ENCODE measurements at regions of chr10 and their contacts with region 1.

Region 1: DNA sequence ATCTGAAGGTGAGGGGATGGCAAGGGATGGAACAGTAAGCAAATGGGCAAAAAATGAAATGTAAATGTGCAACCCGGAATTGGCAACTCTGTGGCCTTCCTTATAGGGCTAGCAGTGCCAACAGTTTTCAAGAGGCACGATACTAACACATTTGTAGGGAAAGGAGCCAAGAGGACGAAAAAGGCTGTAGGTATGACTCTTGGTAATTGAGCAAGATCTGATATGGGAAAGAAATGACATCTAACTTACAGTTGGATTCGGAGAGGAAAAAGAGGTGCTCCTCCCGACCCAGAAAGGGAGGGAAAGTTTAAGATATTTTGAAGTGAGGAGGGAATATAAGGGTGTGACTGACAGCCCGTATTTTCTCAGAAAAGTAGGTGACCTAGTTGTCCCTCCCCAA is 2.1 kb upstream of the CREM start:
- DNase-seq: no peak
- H3K4me3 ChIP-seq: no peak overlapping the region
- H3K27ac ChIP-seq: no peak overlapping the region
- H3K4me1 ChIP-seq: peaks cover 14 to 37% (median 15%) of the 10 kb centered on the region in 3 donors
- H3K27me3 ChIP-seq: no peaks in the 10 kb centered on the region
- CTCF ChIP-seq: no peak
- POLR2A ChIP-seq: no peak

Region 2: DNA sequence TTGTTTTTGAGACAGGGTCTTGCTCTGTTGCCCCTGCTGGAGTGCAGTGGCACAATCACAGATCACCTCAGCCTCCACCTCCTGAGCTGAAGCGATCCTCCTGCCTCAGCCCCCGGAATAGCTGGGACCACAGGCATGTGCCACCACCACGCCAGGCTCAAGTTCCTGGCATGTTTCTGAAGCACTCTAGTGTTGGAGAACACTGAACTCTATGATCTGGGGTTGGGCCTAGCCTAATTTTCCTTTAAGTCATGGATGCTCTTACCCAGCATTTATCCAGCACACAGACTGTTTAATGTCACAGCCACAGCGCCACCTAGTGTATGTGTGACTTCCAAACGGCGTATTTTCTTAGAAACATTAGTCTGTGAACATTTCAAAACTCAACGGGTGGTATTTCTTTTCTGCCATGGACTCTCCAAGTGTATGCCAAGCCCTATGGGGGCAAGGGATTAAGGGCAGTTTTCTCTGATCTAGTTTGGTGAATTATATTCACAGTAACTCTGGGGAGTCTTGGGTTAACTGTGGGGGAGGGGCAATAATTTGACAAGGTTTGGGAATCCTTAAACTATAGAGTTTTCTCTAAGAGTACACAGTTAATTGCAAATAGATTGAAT is 93.9 kb after region 1 on chr10:
- intact Hi-C with region 1: loop called (anchors 5 kb)
- DNase-seq: peak; percentile 9
- H3K4me3 ChIP-seq: no peak overlapping the region
- H3K27ac ChIP-seq: peak overlapping the region in 1 of 4 donors; percentile 45
- H3K4me1 ChIP-seq: peaks cover 0 to 31% (median 5%) of the 10 kb centered on the region in 3 donors
- H3K27me3 ChIP-seq: peaks cover 0 to 4% (median 0%) of the 10 kb centered on the region in 4 donors
- CTCF ChIP-seq: peak; percentile 75 to 83 (median 79)
- POLR2A ChIP-seq: no peak

Region 3: GRCh38 chr10:35331894-35332640 is 207.5 kb after region 1 on chr10:
- intact Hi-C with region 1: no loop called
- DNase-seq: no peak
- H3K4me3 ChIP-seq: no peak overlapping the region
- H3K27ac ChIP-seq: peak overlapping the region in 3 of 4 donors; percentile 6 to 30 (median 18)
- H3K4me1 ChIP-seq: peaks cover 7 to 51% (median 19%) of the 10 kb centered on the region in 3 donors
- H3K27me3 ChIP-seq: no peaks in the 10 kb centered on the region
- CTCF ChIP-seq: no peak
- POLR2A ChIP-seq: no peak